CD8-positive, alpha-beta T cell (primary cell): ENCODE measurements at regions of chr19 and their contacts with region 1.

Region 1: DNA sequence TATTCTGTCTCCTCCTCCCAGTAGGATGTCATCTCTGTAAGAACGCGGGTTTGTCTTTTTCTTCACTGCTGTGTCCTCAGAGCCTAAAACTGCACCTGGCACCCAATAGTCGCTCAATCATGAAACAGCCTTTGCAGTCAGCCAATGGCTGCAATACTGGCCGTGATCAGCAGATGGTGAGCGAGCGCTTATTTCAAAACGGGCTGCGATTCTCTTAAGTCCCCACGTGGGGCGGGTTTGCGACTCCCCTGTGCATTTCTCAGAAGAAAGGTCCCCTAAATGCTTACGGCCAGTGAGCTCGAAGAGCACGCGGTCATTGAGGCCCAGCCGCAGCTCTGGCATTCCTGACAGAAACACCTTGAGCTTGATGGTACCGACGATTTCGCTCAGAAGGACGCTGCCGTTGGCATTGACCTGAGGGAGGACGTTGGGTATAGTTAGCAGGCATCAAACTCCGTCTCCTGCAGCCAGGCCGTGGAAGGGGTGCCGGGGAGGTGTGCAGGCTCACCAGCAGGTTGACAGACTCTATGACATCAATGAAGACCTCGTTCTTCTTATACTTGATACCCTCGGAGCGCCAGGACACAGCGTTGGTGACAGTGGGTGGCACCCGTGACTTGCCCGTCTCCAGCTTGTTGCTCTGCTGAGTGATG is 6.0 kb downstream of the AP1M2 start:
- DNase-seq: peak; percentile 81 to 93 (median 92)
- ATAC-seq: peak; percentile 100
- H3K4me3 ChIP-seq: no peak overlapping the region
- H3K4me3 Mint-ChIP-seq: no peak overlapping the region
- H3K27ac ChIP-seq: no peak overlapping the region
- H3K27ac Mint-ChIP-seq: no peak overlapping the region
- H3K4me1 ChIP-seq: peaks cover 4% of the 10 kb centered on the region
- H3K4me1 Mint-ChIP-seq: peaks cover 11% of the 10 kb centered on the region
- H3K27me3 ChIP-seq: no peaks in the 10 kb centered on the region
- H3K27me3 Mint-ChIP-seq: no peaks in the 10 kb centered on the region
- CTCF ChIP-seq: peak; percentile 99

Region 2: GRCh38 chr19:10363789-10364281 is 217.3 kb before region 1 on chr19:
- CTCF ChIA-PET with region 1: no interaction called
- POLR2A ChIA-PET with region 1: no interaction called
- intact Hi-C with region 1: no loop called
- DNase-seq: no peak
- ATAC-seq: no peak
- H3K4me3 ChIP-seq: no peak overlapping the region
- H3K4me3 Mint-ChIP-seq: no peak overlapping the region
- H3K27ac ChIP-seq: no peak overlapping the region
- H3K27ac Mint-ChIP-seq: no peak overlapping the region
- H3K4me1 ChIP-seq: no peaks in the 10 kb centered on the region
- H3K4me1 Mint-ChIP-seq: no peaks in the 10 kb centered on the region
- H3K27me3 ChIP-seq: no peaks in the 10 kb centered on the region
- H3K27me3 Mint-ChIP-seq: no peaks in the 10 kb centered on the region
- CTCF ChIP-seq: no peak

Region 3: GRCh38 chr19:10491472-10492047 is 89.5 kb before region 1 on chr19:
- CTCF ChIA-PET with region 1: interaction called, 13 read pairs
- POLR2A ChIA-PET with region 1: no interaction called
- intact Hi-C with region 1: no loop called
- DNase-seq: no peak
- ATAC-seq: no peak
- H3K4me3 ChIP-seq: no peak overlapping the region
- H3K4me3 Mint-ChIP-seq: no peak overlapping the region
- H3K27ac ChIP-seq: no peak overlapping the region
- H3K27ac Mint-ChIP-seq: no peak overlapping the region
- H3K4me1 ChIP-seq: no peaks in the 10 kb centered on the region
- H3K4me1 Mint-ChIP-seq: peaks cover 6% of the 10 kb centered on the region
- H3K27me3 ChIP-seq: no peaks in the 10 kb centered on the region
- H3K27me3 Mint-ChIP-seq: no peaks in the 10 kb centered on the region
- CTCF ChIP-seq: no peak

Region 4: GRCh38 chr19:10593820-10594637 is 12.9 kb after region 1 on chr19:
- CTCF ChIA-PET with region 1: interaction called, 77 read pairs
- POLR2A ChIA-PET with region 1: interaction called, 3 read pairs
- intact Hi-C with region 1: no loop called
- DNase-seq: no peak
- ATAC-seq: no peak
- H3K4me3 ChIP-seq: no peak overlapping the region
- H3K4me3 Mint-ChIP-seq: no peak overlapping the region
- H3K27ac ChIP-seq: no peak overlapping the region
- H3K27ac Mint-ChIP-seq: no peak overlapping the region
- H3K4me1 ChIP-seq: peaks cover 20% of the 10 kb centered on the region
- H3K4me1 Mint-ChIP-seq: peaks cover 25% of the 10 kb centered on the region
- H3K27me3 ChIP-seq: no peaks in the 10 kb centered on the region
- H3K27me3 Mint-ChIP-seq: no peaks in the 10 kb centered on the region
- CTCF ChIP-seq: no peak

Region 5: GRCh38 chr19:10625003-10625776 is 44.1 kb after region 1 on chr19 and contains the start of gene SLC44A2:
- CTCF ChIA-PET with region 1: interaction called, 19 read pairs
- POLR2A ChIA-PET with region 1: interaction called, 4 read pairs
- intact Hi-C with region 1: loop called in 1 of 2 experiments (anchors 1 kb)
- DNase-seq: no peak
- ATAC-seq: no peak
- H3K4me3 ChIP-seq: no peak within 1 kb of the TSS
- H3K4me3 Mint-ChIP-seq: peak within 1 kb of the TSS; percentile 35
- H3K27ac ChIP-seq: peak within 1 kb of the TSS; percentile 24 to 58
- H3K27ac Mint-ChIP-seq: peak within 1 kb of the TSS; percentile 77
- H3K4me1 ChIP-seq: peaks cover 31% of the 10 kb centered on the region
- H3K4me1 Mint-ChIP-seq: peaks cover 40% of the 10 kb centered on the region
- H3K27me3 ChIP-seq: no peaks in the 10 kb centered on the region
- H3K27me3 Mint-ChIP-seq: no peaks in the 10 kb centered on the region
- CTCF ChIP-seq: no peak
- total RNA-seq, gene SLC44A2: 175 to 181 TPM

Region 6: DNA sequence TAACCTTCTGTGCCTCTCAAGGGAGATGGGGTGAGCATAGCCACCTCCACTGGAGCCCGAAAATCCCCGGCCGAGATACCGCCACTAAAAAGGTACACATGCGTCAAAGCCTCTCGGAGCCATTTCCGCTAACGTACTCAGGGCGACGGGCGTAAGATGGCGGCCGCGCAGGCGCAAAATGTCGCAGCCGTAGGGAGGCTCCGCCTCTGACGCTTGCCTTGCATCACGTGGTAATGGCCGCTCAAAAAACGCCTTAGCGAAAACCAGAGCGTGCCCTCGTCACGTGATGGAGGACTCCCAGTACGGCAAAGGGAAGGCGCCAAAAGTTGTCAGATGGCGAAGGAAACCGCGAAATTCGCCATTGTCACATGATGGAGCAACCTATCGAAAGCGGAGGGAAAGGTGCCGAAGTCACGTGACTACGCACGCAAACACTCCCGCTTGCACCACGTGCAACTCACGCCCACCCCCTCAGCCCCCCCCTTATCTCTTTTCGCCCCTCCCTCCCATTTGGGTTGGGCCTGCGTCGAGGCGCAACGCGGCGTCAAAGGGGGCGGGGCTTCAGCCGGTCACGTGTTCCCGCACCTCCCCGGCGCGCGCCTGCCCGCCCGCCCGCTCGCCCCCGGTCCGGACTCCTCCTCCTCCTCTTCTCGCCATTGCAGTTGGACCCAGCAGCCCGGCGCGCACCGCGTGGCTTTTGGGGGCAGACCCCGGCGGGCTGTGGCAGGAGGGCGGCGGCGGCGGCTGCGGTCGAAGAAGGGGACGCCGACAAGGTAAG is 72.8 kb after region 1 on chr19 and contains the start of gene ILF3:
- CTCF ChIA-PET with region 1: interaction called, 611 read pairs
- POLR2A ChIA-PET with region 1: interaction called, 4 read pairs
- intact Hi-C with region 1: loop called (anchors 2 kb)
- DNase-seq: peak; percentile 100
- ATAC-seq: peak; percentile 77
- H3K4me3 ChIP-seq: peak within 1 kb of the TSS; percentile 83
- H3K4me3 Mint-ChIP-seq: peak within 1 kb of the TSS; percentile 94
- H3K27ac ChIP-seq: peak within 1 kb of the TSS; percentile 98 to 99
- H3K27ac Mint-ChIP-seq: peak within 1 kb of the TSS; percentile 98
- H3K4me1 ChIP-seq: peaks cover 41% of the 10 kb centered on the region
- H3K4me1 Mint-ChIP-seq: peaks cover 44% of the 10 kb centered on the region
- H3K27me3 ChIP-seq: no peaks in the 10 kb centered on the region
- H3K27me3 Mint-ChIP-seq: no peaks in the 10 kb centered on the region
- CTCF ChIP-seq: no peak
- total RNA-seq, gene ILF3: 604 to 613 TPM

Region 7: GRCh38 chr19:10751109-10751953 is 170.2 kb after region 1 on chr19:
- CTCF ChIA-PET with region 1: no interaction called
- POLR2A ChIA-PET with region 1: no interaction called
- intact Hi-C with region 1: no loop called
- DNase-seq: no peak
- ATAC-seq: no peak
- H3K4me3 ChIP-seq: no peak overlapping the region
- H3K4me3 Mint-ChIP-seq: no peak overlapping the region
- H3K27ac ChIP-seq: peak overlapping the region in 1 of 2 experiments; percentile 8
- H3K27ac Mint-ChIP-seq: peak overlapping the region; percentile 89
- H3K4me1 ChIP-seq: peaks cover 69% of the 10 kb centered on the region
- H3K4me1 Mint-ChIP-seq: peaks cover 77% of the 10 kb centered on the region
- H3K27me3 ChIP-seq: no peaks in the 10 kb centered on the region
- H3K27me3 Mint-ChIP-seq: no peaks in the 10 kb centered on the region
- CTCF ChIP-seq: no peak

Region 8: DNA sequence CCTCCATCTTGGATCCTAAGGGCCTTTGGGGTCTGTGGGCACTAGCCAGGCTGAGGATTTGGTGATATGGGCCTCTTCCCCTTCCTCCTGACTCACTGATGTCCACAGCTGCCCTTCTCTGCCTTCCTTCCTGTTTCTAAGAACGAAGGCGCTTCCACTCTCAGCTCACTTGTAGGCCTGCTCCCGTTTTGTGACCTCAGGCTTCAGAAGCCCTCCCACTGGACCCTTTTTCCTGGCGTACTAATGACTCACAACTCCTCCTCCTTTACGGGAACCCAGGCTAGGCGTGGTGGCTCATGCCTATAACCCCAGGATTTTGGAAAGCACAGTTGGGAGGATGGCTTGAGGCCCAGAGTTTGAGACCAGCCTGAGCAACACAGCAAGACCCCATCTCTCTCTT is 199.3 kb after region 1 on chr19:
- CTCF ChIA-PET with region 1: interaction called, 5 read pairs
- POLR2A ChIA-PET with region 1: no interaction called
- intact Hi-C with region 1: loop called in 1 of 2 experiments (anchors 10 kb)
- DNase-seq: peak in 1 of 9 experiments; percentile 33
- ATAC-seq: no peak
- H3K4me3 ChIP-seq: no peak overlapping the region
- H3K4me3 Mint-ChIP-seq: no peak overlapping the region
- H3K27ac ChIP-seq: no peak overlapping the region
- H3K27ac Mint-ChIP-seq: peak overlapping the region; percentile 55
- H3K4me1 ChIP-seq: no peaks in the 10 kb centered on the region
- H3K4me1 Mint-ChIP-seq: peaks cover 3% of the 10 kb centered on the region
- H3K27me3 ChIP-seq: no peaks in the 10 kb centered on the region
- H3K27me3 Mint-ChIP-seq: no peaks in the 10 kb centered on the region
- CTCF ChIP-seq: no peak